Dorsolateral prefrontal cortex (tissue), 120 donors: ENCODE measurements at regions of chr2 and their contacts with region 1.

Region 1: DNA sequence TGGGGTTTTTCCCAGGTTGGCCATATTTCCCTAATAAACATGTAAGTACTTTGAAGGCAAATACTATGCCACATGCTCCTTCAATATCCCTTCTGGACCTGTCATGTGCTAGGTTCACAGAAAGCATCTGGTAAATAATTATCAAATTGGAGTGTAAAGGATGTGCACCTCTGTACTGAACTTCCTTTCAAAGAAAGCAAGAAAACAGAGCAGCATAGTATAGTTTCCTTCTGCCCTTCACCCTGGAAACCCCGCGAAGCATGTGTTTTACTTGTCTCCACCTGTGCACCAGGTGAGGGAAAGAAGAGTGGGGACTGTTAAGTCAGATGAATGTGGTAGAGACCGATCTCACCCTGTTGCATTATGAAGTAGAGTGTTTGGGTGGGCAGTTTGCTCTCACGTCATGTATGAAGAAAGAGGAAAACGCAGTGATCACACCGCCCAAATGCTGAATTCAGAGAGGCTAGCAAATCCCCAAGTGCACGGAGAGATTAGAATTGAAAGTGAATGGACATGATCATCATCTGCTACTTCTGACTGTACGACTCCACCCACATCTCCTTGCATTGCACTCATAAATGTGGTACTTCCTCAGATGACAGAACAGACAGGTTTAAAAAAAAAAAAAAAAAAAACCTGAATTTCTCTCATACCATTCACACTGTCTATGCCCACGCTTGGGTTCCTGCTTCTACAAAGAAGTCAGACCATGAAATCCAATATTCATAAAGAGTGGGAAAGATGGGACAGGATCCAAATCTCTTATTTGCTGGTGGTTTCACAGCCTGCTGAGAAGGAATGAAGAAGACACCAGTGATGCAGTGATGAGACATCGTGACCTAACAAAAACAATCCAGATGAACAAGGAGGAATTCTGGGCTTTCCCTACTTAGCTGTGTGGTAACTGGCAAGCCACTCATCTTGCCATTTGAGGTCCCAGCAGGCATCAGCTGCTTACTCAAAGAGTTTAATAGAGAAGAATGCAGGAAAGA is 448.6 kb downstream of the BCL11A start:
- DNase-seq: peak in 1 of 10 donors; percentile 25
- H3K4me3 ChIP-seq: no peak overlapping the region
- H3K27ac ChIP-seq: no peak overlapping the region
- H3K27me3 ChIP-seq: no peaks in the 10 kb centered on the region
- CTCF ChIP-seq: no peak

Region 2: DNA sequence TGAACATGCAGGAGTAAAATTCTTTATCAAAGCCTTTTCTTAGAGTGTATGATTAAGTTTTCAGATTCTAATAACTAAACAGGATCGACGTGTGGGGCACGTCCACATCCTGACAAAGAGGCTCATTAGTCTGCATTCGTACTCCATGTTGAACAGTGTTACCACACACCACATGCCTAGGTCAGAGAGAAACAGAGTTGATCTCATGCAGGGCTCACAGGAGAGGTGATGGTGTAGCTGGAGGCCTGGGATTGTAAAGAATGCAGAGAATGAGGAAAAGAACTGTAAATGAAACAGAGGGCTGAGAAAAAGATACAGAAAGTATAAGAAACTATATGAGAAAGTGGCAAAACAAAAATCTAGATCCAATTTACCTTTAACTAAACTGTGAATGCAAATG is 183.8 kb before region 1 on chr2:
- intact Hi-C with region 1: no loop called
- DNase-seq: no peak
- H3K4me3 ChIP-seq: no peak overlapping the region
- H3K27ac ChIP-seq: no peak overlapping the region
- H3K27me3 ChIP-seq: peaks cover 0 to 22% (median 0%) of the 10 kb centered on the region in 45 donors
- CTCF ChIP-seq: no peak

Region 3: DNA sequence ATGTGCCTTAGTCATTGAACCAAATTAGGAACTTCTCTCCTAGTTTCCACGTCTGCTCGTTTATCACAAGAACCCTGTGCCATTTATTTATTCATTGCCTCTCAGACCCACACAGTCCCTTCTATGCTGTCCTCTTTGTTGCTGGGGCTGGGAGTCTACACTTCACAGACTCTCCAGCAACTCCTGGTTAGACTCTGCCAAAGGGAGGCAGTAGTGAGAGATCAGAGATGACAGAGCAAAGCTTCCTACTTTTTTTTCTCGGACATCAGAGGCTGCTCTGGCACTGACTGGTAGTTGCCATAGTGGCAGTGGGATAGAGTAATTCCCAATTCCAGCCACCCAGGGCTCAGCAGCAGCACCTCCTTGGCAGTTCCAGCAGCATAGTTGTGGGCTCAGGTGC is 171.1 kb after region 1 on chr2:
- intact Hi-C with region 1: no loop called
- DNase-seq: no peak
- H3K4me3 ChIP-seq: no peak overlapping the region
- H3K27ac ChIP-seq: no peak overlapping the region
- H3K27me3 ChIP-seq: peaks cover 0 to 13% (median 0%) of the 10 kb centered on the region in 45 donors
- CTCF ChIP-seq: no peak

Region 4: DNA sequence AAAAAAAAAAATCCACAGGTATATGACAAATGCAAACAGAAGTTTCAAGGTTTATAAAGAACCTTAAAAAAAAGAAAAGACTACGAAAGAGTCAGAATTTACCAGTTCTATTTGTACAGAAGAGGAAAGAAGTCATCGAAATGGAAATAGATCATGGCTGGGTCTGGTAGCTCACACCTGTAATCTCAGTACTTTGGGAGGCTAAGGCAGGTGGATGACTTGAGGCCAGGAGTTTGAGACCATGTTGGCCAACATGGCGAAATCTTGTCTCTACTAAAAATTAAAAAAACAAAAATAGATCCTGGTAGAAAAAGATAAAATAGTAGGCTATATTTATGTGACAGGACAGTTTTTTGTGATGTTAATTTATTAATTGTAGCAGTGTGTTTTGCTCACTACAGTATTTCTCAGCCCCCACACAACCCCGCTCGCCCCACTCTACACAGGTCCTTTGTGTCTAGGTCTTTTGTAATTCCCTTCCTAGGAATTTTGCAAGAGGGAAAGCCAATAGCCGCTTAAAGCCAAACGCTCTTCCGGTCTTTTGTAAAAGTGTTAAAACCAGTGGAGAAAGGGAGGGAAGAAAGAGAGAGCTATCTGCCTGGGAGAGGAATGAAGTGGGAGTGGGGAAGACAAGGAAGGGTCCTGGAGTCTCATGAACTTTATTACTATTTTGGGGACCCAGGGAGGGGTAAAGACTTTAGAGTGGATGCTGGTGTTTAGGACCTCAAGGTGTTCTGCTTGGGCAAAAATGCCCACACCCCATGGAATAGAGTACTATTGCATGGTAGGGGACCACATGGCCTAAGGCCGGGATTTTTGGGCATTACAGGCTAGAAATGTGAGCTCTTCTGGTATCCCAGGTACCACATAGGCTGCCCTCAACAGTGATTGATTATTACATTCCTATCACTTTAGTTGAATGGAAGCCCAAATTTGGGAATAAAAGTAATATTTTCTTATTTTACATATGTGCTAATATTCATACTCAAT is 1492.8 kb after region 1 on chr2:
- intact Hi-C with region 1: loop called in 1 of 2 experiments (anchors 5 kb)
- DNase-seq: no peak
- H3K4me3 ChIP-seq: no peak overlapping the region
- H3K27ac ChIP-seq: no peak overlapping the region
- H3K27me3 ChIP-seq: no peaks in the 10 kb centered on the region
- CTCF ChIP-seq: no peak